ENCODE measurements at regions of chr2 and their contacts with region 1.

Region 1: DNA sequence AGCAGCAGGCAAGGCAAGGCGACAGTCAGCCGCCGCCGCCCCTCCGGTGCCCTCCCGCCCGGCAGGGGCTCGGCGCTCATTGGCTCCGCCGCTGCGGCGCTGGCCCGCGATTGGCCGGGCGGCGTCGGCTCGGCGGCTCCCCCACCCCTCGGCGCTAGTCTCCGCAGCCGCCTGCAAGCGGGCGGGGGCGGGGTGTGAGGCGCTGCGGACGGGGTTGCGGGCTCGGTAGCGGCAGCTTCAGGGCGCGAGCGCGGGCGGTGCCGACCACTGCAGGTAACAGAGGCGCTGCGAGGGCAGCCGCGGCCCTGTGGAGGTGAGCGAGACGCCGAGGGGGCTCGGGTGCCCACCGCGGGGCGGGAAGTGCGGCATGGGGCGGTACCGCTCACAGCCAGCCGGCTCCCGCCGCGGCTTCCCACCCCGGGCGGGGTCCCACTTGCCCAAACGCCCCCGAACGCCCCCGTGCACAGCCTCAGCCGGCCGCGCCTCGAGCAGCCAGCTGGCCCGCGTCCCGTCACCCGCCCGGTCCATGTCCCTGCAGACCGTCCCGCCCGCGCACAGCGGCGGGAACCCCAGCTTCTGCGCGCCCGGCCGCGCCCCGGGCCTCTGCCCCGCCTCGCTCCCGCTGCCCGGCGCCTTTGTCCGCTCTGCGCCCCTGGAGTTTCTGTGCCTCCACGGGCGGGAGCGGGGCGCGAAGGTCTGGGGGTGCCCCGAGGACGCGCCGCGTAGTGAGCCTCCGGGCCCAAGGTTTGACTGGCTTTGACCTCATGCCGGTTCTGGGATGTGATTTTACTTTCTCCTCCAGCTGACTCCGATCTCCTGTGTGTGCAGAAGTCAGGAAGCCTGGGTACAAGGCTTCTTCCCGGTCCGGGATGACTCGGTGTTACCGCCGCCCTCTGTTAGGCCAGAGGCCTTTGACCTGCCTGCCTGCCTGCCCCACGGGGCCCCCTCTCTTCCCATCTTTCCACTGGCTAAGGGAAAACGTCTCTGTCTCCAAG is at the start of gene SANBR:
- DNase-seq: peak; percentile 91
- H3K4me3 Mint-ChIP-seq: peak within 1 kb of the TSS; percentile 81
- H3K27ac Mint-ChIP-seq: peak within 1 kb of the TSS; percentile 60
- H3K4me1 Mint-ChIP-seq: peaks cover 8% of the 10 kb centered on the region
- H3K27me3 Mint-ChIP-seq: no peaks in the 10 kb centered on the region
- CTCF ChIP-seq: no peak
- total RNA-seq, gene SANBR: 11.5 and 16.3 TPM in 2 replicates

Region 2: DNA sequence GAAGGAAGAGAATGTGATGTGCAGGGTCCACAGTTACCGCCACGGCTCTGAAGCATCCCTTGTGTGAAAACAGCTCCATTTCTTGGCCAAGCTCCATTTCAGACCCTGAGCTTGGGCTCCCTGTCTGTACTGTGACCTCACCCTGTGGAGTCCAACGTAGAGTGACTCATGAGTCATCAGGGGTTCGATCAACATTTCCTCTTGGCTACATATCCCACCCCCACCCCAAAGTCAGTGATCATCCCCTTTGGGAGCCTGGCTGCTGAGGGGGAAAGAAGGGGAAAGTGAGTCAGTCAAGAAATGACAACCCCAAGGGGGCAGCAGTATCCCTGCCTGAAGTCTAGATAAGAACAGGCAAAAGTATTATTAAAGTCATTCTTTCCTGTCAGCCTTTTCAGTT is 247.7 kb before region 1 on chr2:
- CTCF ChIA-PET with region 1: no interaction called
- intact Hi-C with region 1: no loop called
- DNase-seq: peak; percentile 8
- H3K4me3 Mint-ChIP-seq: no peak overlapping the region
- H3K27ac Mint-ChIP-seq: no peak overlapping the region
- H3K4me1 Mint-ChIP-seq: peaks cover 5% of the 10 kb centered on the region
- H3K27me3 Mint-ChIP-seq: peaks cover 30% of the 10 kb centered on the region
- CTCF ChIP-seq: no peak

Region 3: DNA sequence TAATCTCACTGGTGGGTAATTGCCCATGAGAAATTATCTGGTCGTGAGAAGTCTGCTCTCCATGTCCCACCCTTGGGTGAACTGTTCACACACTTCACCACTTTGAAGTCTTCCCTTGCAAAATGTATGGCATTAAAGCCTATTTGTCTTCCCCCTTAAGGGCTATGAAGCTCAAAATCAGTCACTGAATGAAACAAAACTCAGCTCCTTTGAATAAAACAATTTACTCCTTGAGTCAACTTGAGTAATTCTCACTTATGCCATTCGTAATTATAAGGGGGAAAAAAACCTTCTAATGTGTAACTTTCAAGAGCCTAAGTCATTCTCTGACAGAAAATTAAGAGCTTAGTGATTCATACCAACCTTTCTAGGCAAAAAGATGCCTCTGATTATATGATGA is 233.4 kb before region 1 on chr2:
- CTCF ChIA-PET with region 1: no interaction called
- intact Hi-C with region 1: no loop called
- DNase-seq: no peak
- H3K4me3 Mint-ChIP-seq: no peak overlapping the region
- H3K27ac Mint-ChIP-seq: no peak overlapping the region
- H3K4me1 Mint-ChIP-seq: no peaks in the 10 kb centered on the region
- H3K27me3 Mint-ChIP-seq: peaks cover 81% of the 10 kb centered on the region
- CTCF ChIP-seq: no peak

Region 4: GRCh38 chr2:60906395-60906794 is 159.6 kb before region 1 on chr2:
- CTCF ChIA-PET with region 1: no interaction called
- intact Hi-C with region 1: no loop called
- DNase-seq: no peak
- H3K4me3 Mint-ChIP-seq: no peak overlapping the region
- H3K27ac Mint-ChIP-seq: no peak overlapping the region
- H3K4me1 Mint-ChIP-seq: no peaks in the 10 kb centered on the region
- H3K27me3 Mint-ChIP-seq: no peaks in the 10 kb centered on the region
- CTCF ChIP-seq: no peak

Region 5: GRCh38 chr2:61016808-61017555 is 49.0 kb before region 1 on chr2:
- CTCF ChIA-PET with region 1: no interaction called
- intact Hi-C with region 1: loop called (anchors 2 kb)
- DNase-seq: peak; percentile 80
- H3K4me3 Mint-ChIP-seq: peak overlapping the region; percentile 86
- H3K27ac Mint-ChIP-seq: peak overlapping the region; percentile 91
- H3K4me1 Mint-ChIP-seq: peaks cover 26% of the 10 kb centered on the region
- H3K27me3 Mint-ChIP-seq: no peaks in the 10 kb centered on the region
- CTCF ChIP-seq: no peak

Measured in Calu3 (cell line).